GM10248 (cell line): ENCODE measurements at regions of chr9 and their contacts with region 1.

Region 1: DNA sequence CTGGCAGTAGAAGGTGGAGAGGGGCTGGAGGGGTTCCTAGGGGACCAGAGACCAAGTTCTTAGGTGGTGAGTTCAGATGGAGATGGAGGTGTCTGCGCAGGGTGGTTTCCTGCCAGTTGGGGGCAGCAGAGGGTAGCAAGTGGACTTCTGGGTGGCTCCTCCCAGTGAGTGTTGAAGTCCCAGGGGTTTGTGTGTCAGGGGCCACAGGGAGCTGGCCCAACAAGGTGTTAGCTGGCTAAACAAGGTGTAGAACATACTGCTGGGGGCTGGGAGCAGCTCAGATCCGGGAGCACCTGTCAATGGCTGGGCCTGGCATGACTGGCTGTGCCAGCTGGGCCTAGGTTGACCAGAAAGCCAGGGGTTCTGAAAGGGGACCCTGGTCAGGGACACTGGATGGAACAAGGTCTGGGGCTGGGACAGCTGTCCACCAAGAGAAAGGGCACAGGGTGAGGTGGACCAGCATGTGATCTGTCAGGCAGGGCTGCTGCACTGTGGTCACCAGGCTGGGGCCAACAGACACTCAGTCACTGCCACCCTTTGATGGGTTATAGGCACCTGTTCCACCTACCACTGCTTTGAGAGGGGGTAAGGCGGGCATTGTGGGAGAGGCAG is 35.6 kb downstream of the DAB2IP start:
- DNase-seq: peak; percentile 82
- CTCF ChIP-seq: peak; percentile 84

Region 2: DNA sequence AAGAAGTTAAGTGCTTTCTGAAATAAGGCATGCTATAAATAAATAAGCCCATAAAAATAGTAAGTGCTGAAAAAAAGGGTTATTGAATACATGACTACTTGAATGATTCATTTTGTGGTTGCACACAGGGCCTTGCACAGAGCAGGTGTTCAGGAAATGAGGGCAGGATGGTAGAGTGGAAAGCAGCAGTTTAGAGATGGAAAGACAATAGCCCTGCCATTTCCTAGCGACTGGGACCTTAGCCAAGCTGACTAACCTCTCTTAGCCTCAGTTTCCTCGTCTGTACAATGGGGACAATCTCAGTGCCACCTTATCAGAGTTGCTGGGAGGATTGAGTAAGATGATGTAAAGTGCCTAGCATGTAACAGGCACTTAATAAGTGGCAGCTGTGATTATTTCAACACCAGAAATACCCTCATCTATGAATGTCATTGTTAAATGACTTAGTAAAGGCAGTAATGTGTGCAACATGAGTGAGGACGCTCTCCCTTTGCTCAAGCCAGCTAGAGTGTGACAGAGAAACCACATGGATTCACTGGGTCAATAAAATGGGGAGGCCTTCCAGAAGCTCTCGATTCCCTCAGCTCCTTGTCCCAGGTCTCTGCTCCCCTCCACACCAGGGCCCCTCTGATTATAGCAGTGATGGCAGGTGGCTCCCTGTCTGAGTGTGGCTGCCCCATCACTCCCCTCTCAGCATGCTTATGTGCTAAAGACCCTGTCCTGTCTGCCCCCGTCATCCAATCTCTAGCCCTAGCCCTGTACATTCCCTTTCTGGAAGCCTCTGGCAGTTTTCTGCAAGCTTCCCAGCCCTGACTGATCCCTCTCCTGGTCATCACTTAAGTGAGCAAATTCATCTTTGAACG is 794.1 kb before region 1 on chr9:
- CTCF ChIA-PET with region 1: no interaction called
- POLR2A ChIA-PET with region 1: no interaction called
- DNase-seq: peak; percentile 70
- CTCF ChIP-seq: no peak

Region 3: DNA sequence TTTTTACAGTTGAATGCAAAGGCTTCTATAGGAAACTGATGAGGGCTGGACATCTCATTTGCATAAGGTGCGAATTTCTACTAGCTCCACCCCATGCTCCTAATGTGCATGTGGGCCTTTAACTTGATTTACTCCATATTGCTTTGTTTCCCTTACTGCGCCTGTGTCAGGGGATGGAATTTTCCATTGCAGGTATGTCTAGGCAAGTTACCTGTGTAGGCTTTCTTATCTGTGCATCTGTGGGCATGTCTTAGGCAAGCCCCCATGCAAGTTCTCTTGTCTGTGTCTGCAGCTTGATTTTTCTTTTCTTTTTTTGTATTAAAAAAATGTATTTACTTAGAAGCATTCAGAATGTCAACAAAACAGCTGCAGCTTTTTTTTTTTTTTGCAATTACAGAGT is 168.0 kb before region 1 on chr9:
- CTCF ChIA-PET with region 1: no interaction called
- POLR2A ChIA-PET with region 1: no interaction called
- DNase-seq: no peak
- CTCF ChIP-seq: no peak

Region 4: DNA sequence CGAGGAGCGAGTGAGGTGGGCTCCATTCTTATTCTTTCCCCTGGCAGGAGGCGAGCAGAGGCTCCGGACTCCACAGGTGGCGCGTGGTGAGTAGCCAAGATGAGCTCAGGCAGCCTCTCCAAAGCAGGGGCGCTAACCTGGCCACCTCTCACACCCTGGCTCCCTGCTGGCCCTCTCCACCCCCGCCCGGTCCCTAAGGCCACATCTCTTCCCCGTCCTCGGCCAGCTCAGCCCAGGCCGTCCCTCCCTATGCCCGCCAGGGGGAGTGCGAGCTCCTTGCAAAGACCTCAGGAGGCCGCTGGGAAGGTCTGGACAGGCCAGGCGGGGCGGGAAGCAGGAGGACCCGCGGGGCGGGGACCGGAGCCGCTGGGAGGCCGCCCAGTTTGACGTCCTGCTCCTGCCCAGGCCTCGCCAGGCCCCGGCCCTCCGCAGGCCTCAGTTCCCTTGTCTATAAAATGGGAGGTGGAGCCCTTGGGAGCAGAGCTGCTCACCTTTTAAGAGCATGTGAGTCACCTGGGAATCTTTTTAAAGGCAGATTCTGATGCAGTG is 141.1 kb before region 1 on chr9:
- CTCF ChIA-PET with region 1: interaction called, 22 read pairs
- POLR2A ChIA-PET with region 1: no interaction called
- DNase-seq: peak; percentile 91
- CTCF ChIP-seq: peak; percentile 98

Region 5: GRCh38 chr9:121662891-121663580 is 24.0 kb before region 1 on chr9:
- CTCF ChIA-PET with region 1: interaction called, 15 read pairs
- POLR2A ChIA-PET with region 1: no interaction called
- DNase-seq: no peak
- CTCF ChIP-seq: no peak

Region 6: DNA sequence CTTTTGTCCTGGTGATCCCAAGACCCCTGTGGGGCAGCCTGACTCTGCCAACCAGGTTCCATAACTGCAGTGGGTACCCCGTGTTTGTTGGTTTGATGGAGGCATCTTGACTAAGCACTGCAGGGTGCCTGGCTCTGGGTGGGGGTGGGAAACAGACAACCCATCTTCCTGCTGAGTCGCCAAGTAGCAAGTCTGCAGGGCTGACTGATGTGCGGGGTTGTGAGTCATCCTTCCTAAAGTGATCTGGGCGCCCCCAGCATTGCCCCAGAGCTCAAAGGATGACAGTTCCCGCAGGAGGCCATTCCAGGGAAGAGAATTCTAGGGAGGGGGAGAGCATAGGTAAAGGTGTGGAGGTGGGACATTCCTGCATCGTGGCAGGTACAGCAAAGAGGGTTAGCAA is 12.1 kb before region 1 on chr9:
- CTCF ChIA-PET with region 1: interaction called, 13 read pairs
- POLR2A ChIA-PET with region 1: no interaction called
- DNase-seq: no peak
- CTCF ChIP-seq: no peak

Region 7: DNA sequence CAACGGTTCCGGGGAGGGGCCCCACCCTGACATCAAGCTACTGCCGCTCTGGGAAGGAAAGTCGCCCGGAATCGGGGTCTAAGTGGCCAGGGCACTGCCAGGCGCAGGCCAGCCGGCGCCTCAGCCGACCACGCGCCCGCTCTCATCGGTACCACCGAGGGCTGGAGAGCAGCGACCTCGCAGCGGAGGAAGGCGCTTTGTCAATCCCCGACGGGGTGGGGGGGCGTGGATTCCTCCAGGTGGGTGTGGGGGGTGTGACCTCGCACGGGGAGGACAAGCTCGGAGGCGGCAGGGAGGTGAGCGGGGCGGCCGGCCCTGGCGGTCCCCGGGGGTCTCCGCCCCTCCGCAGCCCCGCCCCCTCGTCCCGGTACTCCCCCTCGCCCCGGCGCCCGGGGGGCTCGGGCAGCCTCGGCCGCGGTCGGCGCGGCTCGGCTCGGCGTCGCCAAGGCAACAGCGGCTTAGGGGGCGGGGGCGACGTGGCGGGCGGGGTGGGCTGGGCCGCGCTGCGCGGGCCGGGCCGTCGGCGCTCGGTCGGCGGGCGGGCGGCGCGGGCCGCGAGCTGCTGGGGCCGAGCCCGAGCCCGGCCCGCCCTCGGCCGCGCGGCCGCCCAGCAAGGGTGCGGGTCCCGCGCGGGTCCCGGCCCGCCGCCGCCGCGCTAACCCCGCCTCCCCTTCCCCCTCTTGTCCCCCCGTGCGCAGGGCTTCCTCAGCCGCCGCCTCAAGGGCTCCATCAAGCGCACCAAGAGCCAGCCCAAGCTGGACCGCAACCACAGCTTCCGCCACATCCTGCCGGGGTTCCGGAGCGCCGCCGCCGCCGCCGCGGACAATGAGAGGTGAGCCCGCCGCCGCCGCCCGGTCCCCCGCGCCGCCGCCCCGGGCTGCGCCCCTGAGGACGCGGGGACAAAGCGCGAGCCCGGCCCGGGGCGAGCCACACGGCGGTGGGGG is 11.9 kb after region 1 on chr9:
- CTCF ChIA-PET with region 1: interaction called, 13 read pairs
- POLR2A ChIA-PET with region 1: no interaction called
- DNase-seq: peak; percentile 52
- CTCF ChIP-seq: no peak

Region 8: DNA sequence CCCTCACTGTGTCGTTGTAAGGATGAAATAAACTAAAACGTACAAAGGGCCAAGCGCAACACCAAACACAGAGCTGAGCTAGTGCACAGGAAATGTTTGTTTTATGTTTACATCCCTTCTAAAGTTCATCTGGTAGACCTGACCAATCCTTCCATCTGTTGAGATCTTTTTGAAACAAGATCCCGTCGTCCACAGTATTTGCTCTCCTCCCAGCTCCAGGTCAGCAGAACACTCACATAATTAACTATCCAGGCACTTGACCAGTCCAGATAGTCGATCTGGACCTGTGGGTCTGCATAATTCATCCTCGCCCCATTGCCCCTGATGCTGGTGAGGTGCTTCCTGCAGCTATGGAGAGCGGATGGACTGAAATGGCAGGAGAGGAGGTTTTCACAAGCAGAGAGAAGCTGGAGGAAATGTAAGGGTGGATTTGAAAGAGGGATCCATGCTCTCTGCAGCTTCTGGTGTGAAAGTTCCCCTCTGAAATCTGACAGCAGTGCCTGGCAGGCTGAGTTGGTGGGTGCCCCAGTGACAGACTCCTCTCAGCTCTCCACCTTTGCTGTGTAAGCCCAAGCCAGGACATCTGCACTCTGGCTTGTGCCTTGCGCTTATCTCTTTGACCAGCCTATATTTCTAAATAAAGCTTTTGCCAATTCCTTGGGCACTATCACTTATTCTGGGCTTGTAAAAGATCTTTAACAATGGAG is 303.7 kb after region 1 on chr9:
- CTCF ChIA-PET with region 1: interaction called, 17 read pairs
- POLR2A ChIA-PET with region 1: no interaction called
- DNase-seq: no peak
- CTCF ChIP-seq: no peak

Region 9: GRCh38 chr9:121996783-121997182 is 309.7 kb after region 1 on chr9:
- CTCF ChIA-PET with region 1: interaction called, 10 read pairs
- POLR2A ChIA-PET with region 1: no interaction called
- DNase-seq: no peak
- CTCF ChIP-seq: no peak